Right ventricle myocardium inferior (tissue), 1 donor: ENCODE measurements at regions of chr15 and their contacts with region 1.

Region 1: DNA sequence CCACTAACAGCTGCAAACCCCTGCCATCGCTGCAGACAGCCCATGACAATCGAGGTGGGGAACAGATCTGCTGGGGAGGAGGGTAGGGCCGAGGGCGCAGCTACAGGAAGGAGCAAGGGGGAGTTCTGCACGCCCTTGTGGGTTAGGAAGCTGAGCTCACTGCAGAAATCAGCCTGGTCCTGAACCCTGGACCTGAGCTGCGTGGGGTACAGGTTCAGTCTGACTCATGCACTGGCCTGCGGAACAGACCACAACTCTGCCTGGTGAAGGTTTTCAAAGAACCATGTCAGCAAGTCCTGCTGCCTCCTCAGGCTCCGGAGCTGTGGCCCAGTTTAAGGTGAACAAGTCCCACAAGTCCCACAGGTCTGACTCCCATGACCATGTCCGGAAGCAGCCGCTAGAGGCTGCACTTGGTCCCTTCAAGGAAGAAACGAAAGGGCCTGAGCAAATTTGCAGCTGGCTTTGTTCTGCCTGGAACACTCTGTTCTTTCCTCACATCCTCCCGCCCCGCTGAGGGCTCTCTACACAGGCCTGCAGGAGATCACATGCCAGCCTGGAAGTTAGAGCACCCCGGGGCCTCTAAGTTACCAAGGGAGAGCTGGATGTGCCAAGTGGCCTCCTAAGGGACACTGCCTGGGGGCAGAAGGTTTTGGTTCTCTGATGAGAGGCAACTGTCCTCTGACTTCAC is 49.4 kb upstream of the AKAP13 start:
- DNase-seq: peak; percentile 94
- ATAC-seq: peak; percentile 96

Region 2: GRCh38 chr15:85394552-85395333 is 63.7 kb after region 1 on chr15:
- intact Hi-C with region 1: no loop called
- DNase-seq: no peak
- ATAC-seq: no peak

Region 3: DNA sequence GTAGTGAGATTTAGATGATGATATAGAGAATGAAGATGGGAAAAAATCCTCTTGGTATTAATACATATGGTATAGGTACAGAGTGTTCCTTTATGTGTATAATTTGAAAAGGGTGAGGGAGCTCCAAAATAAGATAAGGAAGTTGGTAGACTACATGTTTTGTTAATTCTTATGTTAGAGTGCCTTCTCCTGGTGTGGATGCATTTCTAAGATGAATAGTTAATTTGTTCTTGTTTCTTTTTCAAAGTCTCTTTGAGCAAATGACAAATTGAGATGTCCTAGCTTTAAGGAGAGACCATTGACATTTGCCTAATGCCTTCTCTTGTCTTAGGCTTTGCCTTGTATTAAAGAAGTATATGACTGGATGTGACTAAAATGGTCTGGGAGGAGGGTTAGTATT is 83.5 kb after region 1 on chr15:
- intact Hi-C with region 1: loop called (anchors 1 kb)
- DNase-seq: no peak
- ATAC-seq: no peak